ENCODE measurements at regions of chr5 and their contacts with region 1.

Region 1: DNA sequence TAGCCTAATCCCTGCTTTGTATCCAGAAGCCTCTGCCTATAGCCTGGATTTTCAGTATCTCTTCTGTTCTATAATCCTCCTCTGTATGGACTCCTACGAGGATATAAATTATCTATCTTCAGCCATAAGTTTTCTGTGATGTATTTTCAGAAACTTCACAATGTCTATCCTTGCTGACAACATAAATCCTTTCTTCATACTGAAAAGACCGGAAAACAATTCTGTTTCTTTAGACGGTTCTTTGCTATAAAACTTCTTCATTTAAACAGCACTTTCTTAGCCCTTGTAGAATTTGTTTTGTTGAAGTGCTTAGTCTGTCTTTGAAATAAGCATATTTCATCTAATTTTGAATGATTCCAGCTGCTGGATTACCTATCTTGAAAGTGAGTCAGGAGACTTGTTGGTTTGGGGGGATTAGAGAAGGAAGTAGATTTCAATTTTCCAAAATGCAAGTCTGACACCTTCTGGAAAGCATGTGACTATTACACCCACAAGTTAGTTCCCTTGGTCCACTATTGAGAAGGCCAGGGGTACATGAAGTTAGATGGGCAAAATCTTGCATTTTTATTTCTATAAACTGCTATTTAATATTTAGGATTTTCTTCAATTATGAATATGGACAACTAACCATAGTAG is 96.3 kb upstream of the RANBP3L start:
- H3K4me3 ChIP-seq: no peak overlapping the region
- H3K27ac ChIP-seq: no peak overlapping the region
- H3K4me1 ChIP-seq: peaks cover 18% of the 10 kb centered on the region
- CTCF ChIP-seq: peak; percentile 72

Region 2: GRCh38 chr5:36177715-36178523 is 220.1 kb before region 1 on chr5:
- CTCF ChIA-PET with region 1: interaction called, 11 read pairs
- POLR2A ChIA-PET with region 1: no interaction called
- H3K4me3 ChIP-seq: no peak overlapping the region
- H3K27ac ChIP-seq: no peak overlapping the region
- H3K4me1 ChIP-seq: no peaks in the 10 kb centered on the region
- CTCF ChIP-seq: peak; percentile 39; the same call in 1 of the 2 replicates

Region 3: DNA sequence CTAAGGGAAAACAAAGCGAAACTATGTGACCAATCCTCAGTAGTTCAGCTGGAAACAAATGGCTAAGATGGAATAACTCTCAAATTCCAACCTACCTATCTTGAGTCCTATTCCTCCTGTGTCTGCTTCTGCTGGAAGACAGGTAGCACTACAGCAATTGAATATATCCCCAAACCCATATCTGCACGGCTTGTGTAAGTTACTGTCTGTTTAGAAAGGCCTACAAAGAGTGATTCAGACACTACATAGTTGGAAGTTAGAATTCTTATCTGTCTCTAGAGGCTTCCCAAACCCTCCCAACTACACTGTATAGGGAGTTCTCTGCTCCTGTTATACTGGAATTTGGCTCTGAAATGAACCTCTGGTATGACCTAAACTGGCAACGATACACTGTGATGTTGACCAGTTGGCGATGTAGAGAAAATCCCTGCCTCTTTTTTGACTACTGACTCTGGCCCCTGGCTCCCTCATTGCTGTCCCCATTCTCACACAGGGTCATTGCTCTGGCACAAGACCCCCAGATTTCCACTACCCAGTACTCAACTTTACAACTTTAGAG is 133.7 kb before region 1 on chr5:
- CTCF ChIA-PET with region 1: interaction called, 11 read pairs
- POLR2A ChIA-PET with region 1: no interaction called
- H3K4me3 ChIP-seq: no peak overlapping the region
- H3K27ac ChIP-seq: no peak overlapping the region
- H3K4me1 ChIP-seq: no peaks in the 10 kb centered on the region
- CTCF ChIP-seq: no peak

Region 4: GRCh38 chr5:36630201-36631145 is 232.5 kb after region 1 on chr5:
- CTCF ChIA-PET with region 1: no interaction called
- POLR2A ChIA-PET with region 1: no interaction called
- H3K4me3 ChIP-seq: no peak overlapping the region
- H3K27ac ChIP-seq: no peak overlapping the region
- H3K4me1 ChIP-seq: no peaks in the 10 kb centered on the region
- CTCF ChIP-seq: no peak

Measured in HEK293 (cell line).